ENCODE measurements at regions of chr2 and their contacts with region 1.

Region 1: GRCh38 chr2:70871398-70872211 is 36.0 kb upstream of the CD207 start:
- DNase-seq: peak; percentile 95
- ATAC-seq: peak; percentile 98
- H3K4me3 Mint-ChIP-seq: no peak overlapping the region
- H3K27ac Mint-ChIP-seq: no peak overlapping the region
- H3K4me1 Mint-ChIP-seq: no peaks in the 10 kb centered on the region
- H3K27me3 Mint-ChIP-seq: peaks cover 65% of the 10 kb centered on the region
- CTCF ChIP-seq: peak; percentile 79

Region 2: GRCh38 chr2:70887550-70888246 is 16.1 kb after region 1 on chr2:
- CTCF ChIA-PET with region 1: interaction called, 10 read pairs
- POLR2A ChIA-PET with region 1: no interaction called
- DNase-seq: peak; percentile 87
- ATAC-seq: peak; percentile 59
- H3K4me3 Mint-ChIP-seq: peak overlapping the region; percentile 63
- H3K27ac Mint-ChIP-seq: no peak overlapping the region
- H3K4me1 Mint-ChIP-seq: peaks cover 32% of the 10 kb centered on the region
- H3K27me3 Mint-ChIP-seq: peaks cover 100% of the 10 kb centered on the region
- CTCF ChIP-seq: no peak

Region 3: DNA sequence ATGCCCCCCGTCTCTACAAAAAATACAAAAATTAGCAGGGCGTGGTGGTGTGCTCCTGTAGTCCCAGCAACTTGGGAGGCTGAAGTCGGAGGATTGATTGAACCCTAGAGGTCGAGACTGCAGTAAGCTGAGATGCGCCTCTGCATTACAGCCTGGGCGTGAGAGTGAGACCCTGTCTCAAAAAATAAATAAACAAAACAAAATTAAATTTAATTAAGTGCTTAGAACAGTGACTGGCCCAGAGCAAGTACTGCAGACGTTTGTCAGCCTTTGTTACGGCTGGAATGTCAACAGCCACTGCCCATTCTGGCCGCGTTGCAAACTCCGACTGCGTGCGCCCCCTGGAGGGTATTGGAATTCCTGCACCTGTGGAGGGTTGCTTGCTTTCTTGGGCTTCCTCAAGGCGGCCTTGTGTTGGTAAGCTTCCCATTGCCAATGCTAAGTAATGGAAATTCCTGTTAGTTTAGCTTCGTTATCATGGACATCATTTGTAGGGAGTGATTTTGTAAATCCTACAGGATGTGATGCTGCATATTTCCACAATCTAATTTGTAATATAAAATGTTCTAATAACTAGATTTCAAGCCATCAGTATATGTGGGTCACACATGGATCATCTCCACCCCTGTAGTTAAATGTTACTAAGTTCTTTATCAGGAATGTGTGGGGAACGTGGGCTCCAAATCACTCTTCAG is 48.2 kb after region 1 on chr2:
- CTCF ChIA-PET with region 1: interaction called, 36 read pairs
- POLR2A ChIA-PET with region 1: no interaction called
- DNase-seq: peak; percentile 94
- ATAC-seq: peak; percentile 88
- H3K4me3 Mint-ChIP-seq: no peak overlapping the region
- H3K27ac Mint-ChIP-seq: no peak overlapping the region
- H3K4me1 Mint-ChIP-seq: peaks cover 13% of the 10 kb centered on the region
- H3K27me3 Mint-ChIP-seq: peaks cover 34% of the 10 kb centered on the region
- CTCF ChIP-seq: peak; percentile 92

Region 4: GRCh38 chr2:70935468-70936164 is 64.0 kb after region 1 on chr2 and contains the start of gene ATP6V1B1:
- CTCF ChIA-PET with region 1: interaction called, 16 read pairs
- POLR2A ChIA-PET with region 1: no interaction called
- DNase-seq: peak; percentile 53
- ATAC-seq: peak; percentile 20
- H3K4me3 Mint-ChIP-seq: no peak within 1 kb of the TSS
- H3K27ac Mint-ChIP-seq: no peak within 1 kb of the TSS
- H3K4me1 Mint-ChIP-seq: peaks cover 25% of the 10 kb centered on the region
- H3K27me3 Mint-ChIP-seq: peaks cover 48% of the 10 kb centered on the region
- CTCF ChIP-seq: no peak
- total RNA-seq, gene ATP6V1B1: not detected in 3 replicates

Measured in WTC11 (cell line).